ENCODE measurements at regions of chr17 and their contacts with region 1.

Region 1: GRCh38 chr17:44324571-44325275 is at the start of gene SLC25A39:
- DNase-seq: no peak
- ATAC-seq: peak; percentile 80
- H3K4me3 ChIP-seq: peak within 1 kb of the TSS; percentile 97
- H3K27ac ChIP-seq: peak within 1 kb of the TSS; percentile 96
- H3K4me1 ChIP-seq: peaks cover 8% of the 10 kb centered on the region
- H3K27me3 ChIP-seq: no peaks in the 10 kb centered on the region
- CTCF ChIP-seq: no peak
- EP300 ChIP-seq: no peak
- POLR2A ChIP-seq: peak; percentile 88
- RAD21 ChIP-seq: no peak
- polyA plus RNA-seq, gene SLC25A39: 3.5 to 7.5 TPM

Region 2: GRCh38 chr17:44141717-44142285 is 182.9 kb before region 1 on chr17 and contains the start of gene HROB:
- CTCF ChIA-PET with region 1: interaction called, 3 read pairs
- POLR2A ChIA-PET with region 1: no interaction called
- RAD21 ChIA-PET with region 1: no interaction called
- SMC1A ChIA-PET with region 1: no interaction called
- in situ Hi-C with region 1: loop called (anchors 5 kb)
- intact Hi-C with region 1: loop called (anchors 5 kb)
- DNase-seq: peak; percentile 87
- ATAC-seq: peak; percentile 94
- H3K4me3 ChIP-seq: peak within 1 kb of the TSS; percentile 85
- H3K27ac ChIP-seq: peak within 1 kb of the TSS; percentile 91
- H3K4me1 ChIP-seq: peaks cover 15% of the 10 kb centered on the region
- H3K27me3 ChIP-seq: no peaks in the 10 kb centered on the region
- CTCF ChIP-seq: peak; percentile 92 to 95 (median 94); a peak in 5 of 6 replicates
- EP300 ChIP-seq: no peak
- POLR2A ChIP-seq: peak; percentile 49; the same call in 1 of the 2 replicates
- RAD21 ChIP-seq: peak; percentile 54
- polyA plus RNA-seq, gene HROB: 4.0 to 4.7 TPM

Region 3: DNA sequence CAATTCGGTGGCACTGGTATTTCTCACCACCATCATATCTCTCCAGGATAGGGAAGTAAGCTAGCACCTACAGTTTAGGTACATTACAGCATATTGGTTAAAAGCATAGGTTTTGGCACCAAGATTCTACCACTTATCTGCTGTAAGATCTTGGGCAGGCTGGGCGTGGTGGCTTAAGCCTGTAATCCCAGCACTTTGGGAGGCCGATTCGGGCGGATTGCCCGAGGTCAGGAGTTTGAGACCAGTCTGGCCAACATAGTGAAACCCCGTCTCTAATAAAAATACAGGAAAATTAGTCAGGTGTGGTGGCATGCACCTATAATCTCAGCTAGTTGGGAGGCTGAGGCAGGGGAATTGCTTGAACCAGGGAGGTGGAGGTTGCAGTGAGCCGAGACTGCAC is 127.1 kb after region 1 on chr17:
- CTCF ChIA-PET with region 1: no interaction called
- POLR2A ChIA-PET with region 1: no interaction called
- RAD21 ChIA-PET with region 1: no interaction called
- SMC1A ChIA-PET with region 1: no interaction called
- in situ Hi-C with region 1: no loop called
- intact Hi-C with region 1: no loop called
- DNase-seq: no peak
- ATAC-seq: no peak
- H3K4me3 ChIP-seq: no peak overlapping the region
- H3K27ac ChIP-seq: no peak overlapping the region
- H3K4me1 ChIP-seq: no peaks in the 10 kb centered on the region
- H3K27me3 ChIP-seq: no peaks in the 10 kb centered on the region
- CTCF ChIP-seq: no peak
- EP300 ChIP-seq: no peak
- POLR2A ChIP-seq: no peak
- RAD21 ChIP-seq: no peak